Activated T-helper 1 cell treated with anti-CD3 and anti-CD28 coated beads, Interleukin-12 subunit alpha, Interleukin-12 subunit beta, Interleukin-2, Interleukin-4 antibody, amounts not matched to agents 30 ng/mL and 10 ng/mL and 1 ng/mL, durations not matched to agents 14 hours and 24 hours and 36 hours (primary cell): ENCODE measurements at regions of chr13 and their contacts with region 1.

Region 1: GRCh38 chr13:27424246-27425157 is at the start of gene GTF3A:
- DNase-seq: peak; percentile 88
- H3K4me3 Mint-ChIP-seq: peak within 1 kb of the TSS; percentile 89
- H3K27ac Mint-ChIP-seq: peak within 1 kb of the TSS; percentile 98
- H3K4me1 Mint-ChIP-seq: peaks cover 37% of the 10 kb centered on the region
- H3K27me3 Mint-ChIP-seq: no peaks in the 10 kb centered on the region
- total RNA-seq, gene GTF3A: 255 and 264 TPM in 2 replicates

Region 2: DNA sequence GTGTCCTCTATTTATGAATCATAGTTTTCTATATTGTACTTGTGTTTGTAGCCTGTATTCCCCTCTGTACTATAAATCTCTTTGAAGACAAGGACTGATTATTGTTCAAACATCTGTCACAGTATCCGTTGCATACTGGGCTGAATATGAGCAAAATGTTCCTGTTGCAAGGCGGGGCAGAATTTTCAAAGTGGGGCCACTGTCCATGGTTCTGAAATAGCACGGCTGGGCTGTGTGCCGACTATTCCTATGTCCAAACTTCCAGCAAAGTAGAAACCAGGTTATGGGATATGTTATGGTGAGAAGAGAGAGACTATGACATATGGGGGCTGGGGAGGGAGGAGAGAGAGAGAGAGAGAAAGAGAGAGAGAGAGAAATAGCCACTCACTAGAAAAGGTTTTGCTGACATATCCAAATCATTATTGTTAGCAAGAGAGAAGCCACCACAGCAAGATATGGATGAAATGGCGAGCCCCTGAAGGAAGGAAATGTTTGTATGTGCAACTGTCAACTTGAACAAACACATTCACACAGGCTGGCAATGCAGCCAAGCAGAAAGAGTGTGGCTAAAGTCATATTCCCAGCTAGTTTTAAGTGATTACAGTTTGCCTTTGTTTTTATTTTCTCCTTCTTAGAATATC is 556.9 kb before region 1 on chr13:
- intact Hi-C with region 1: no loop called
- DNase-seq: no peak
- H3K4me3 Mint-ChIP-seq: no peak overlapping the region
- H3K27ac Mint-ChIP-seq: no peak overlapping the region
- H3K4me1 Mint-ChIP-seq: no peaks in the 10 kb centered on the region
- H3K27me3 Mint-ChIP-seq: no peaks in the 10 kb centered on the region

Region 3: DNA sequence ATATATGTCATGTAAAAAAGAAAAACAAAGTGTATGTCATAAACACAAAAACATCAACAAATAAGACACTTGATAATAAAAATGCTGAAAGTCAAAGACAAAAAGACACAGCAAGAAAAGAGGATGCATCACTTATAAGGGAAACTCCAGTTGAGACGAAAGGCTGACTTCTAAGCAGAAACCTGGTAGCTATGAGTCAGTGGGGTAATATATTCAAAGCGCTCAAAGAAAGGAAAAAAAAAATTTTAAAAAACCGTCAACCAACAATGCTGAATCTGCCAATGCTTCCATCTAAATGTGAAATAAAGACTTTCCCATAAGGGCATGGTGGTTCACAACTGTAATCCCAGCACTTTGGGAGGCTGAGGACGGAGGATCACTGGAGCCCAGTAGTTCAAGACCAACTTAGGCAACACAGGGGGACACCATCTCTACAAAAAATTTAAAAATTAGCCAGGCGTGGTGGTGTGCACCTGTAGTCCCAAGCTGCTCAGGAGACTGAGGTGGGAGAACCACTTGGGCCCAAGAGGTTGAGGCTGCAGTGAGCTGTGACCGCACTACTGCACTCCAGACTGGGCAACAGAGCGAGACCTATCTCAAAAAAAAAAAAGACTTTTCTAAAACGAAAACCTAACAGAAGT is 276.9 kb before region 1 on chr13:
- intact Hi-C with region 1: loop called (anchors 5 kb)
- DNase-seq: no peak
- H3K4me3 Mint-ChIP-seq: peak overlapping the region; percentile 55
- H3K27ac Mint-ChIP-seq: peak overlapping the region; percentile 93
- H3K4me1 Mint-ChIP-seq: peaks cover 71% of the 10 kb centered on the region
- H3K27me3 Mint-ChIP-seq: no peaks in the 10 kb centered on the region

Region 4: DNA sequence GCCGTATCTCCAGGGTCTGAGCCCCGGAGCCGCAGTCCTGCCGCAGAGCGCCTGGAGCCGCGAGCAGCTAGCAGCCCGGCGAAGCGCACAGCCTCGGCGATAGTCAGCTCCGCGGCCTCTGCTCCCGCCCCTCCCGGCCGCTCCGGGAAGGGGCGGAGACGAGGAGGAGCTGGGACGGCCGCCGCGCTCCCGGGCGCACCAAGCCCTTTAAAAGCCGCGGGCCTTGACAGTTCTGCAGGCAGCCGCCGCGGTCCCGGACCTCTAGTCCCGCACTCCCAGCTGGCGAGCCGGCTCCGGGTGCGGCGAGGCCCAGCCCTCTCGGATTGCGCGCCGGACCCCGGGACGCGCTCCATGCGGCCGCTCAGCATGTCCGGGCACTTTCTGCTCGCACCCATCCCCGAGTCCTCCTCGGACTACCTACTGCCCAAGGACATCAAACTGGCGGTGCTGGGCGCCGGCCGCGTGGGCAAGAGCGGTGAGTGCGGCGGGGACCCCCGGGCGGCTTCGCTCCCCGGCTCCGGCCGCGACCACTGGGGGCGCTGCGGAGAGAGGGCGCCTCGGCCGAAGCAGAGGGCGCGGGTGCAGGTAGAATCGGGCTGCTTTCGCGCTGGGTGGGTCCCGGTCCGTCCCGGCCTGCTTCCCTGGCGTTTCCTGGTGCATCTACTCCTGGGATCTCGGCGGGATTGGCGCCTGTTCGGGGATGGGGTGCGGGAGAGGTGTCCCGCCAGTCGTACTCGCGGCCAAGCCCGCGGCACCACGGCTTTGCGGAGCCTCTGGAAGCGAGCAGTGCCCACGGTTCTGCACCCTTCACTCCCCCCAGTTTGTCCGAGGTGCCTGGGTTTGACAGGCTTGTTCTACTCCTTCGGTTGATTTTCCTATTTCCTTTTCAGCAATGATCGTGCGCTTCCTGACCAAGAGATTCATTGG is 153.6 kb before region 1 on chr13 and contains the start of gene RASL11A:
- intact Hi-C with region 1: loop called (anchors 5 kb)
- DNase-seq: peak; percentile 63
- H3K4me3 Mint-ChIP-seq: peak within 1 kb of the TSS; percentile 89
- H3K27ac Mint-ChIP-seq: peak within 1 kb of the TSS; percentile 24
- H3K4me1 Mint-ChIP-seq: peaks cover 11% of the 10 kb centered on the region
- H3K27me3 Mint-ChIP-seq: peaks cover 40% of the 10 kb centered on the region
- total RNA-seq, gene RASL11A: 1.9 and 3.2 TPM in 2 replicates

Region 5: DNA sequence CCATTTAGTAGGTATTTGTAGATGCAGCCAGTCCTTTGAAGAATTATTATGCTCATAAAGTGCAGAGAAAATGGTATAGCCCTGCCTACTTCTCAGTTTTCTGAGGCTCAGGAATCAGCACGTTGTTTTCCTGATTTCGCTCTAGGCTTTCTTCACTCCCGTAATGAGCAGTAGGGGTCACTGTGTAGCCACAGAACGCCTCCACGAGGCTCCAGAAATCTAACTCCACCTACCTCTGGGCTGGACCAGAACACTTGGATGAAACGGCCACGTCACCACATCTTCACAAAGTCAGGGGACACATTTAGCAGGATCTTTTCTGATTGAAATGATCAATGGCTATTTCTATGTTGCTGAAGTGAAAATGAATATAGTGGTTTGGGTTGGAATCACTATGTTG is 49.9 kb before region 1 on chr13:
- intact Hi-C with region 1: loop called (anchors 1 kb)
- DNase-seq: peak; percentile 38
- H3K4me3 Mint-ChIP-seq: no peak overlapping the region
- H3K27ac Mint-ChIP-seq: no peak overlapping the region
- H3K4me1 Mint-ChIP-seq: peaks cover 26% of the 10 kb centered on the region
- H3K27me3 Mint-ChIP-seq: peaks cover 26% of the 10 kb centered on the region

Region 6: GRCh38 chr13:27449936-27450828 is 25.7 kb after region 1 on chr13 and contains the start of gene MTIF3:
- intact Hi-C with region 1: loop called (anchors 1 kb)
- DNase-seq: peak; percentile 95
- H3K4me3 Mint-ChIP-seq: peak within 1 kb of the TSS; percentile 91
- H3K27ac Mint-ChIP-seq: peak within 1 kb of the TSS; percentile 93
- H3K4me1 Mint-ChIP-seq: peaks cover 58% of the 10 kb centered on the region
- H3K27me3 Mint-ChIP-seq: no peaks in the 10 kb centered on the region
- total RNA-seq, gene MTIF3: 30.4 and 36.0 TPM in 2 replicates

Region 7: DNA sequence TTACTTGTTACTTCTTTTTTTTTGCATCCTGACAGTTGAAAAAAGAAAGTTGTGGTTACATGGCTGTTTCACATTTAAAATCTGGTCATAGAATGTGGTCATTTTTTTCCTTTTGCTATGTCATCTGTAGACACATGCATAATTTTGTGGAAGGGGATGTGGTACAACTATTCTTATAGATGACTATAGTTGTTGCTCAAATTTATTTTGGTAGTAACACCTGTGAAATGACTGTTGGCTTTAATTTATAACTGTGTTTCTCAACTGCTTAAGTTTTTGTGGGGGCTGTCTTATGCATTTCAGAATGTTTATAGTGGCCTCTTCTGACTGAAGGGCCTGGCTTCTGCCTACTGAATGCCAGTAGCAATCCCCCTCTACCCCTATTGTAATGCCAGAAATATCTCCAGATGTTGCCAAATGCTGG is 844.3 kb after region 1 on chr13:
- intact Hi-C with region 1: loop called (anchors 5 kb)
- DNase-seq: no peak
- H3K4me3 Mint-ChIP-seq: peak overlapping the region; percentile 49
- H3K27ac Mint-ChIP-seq: peak overlapping the region; percentile 70
- H3K4me1 Mint-ChIP-seq: peaks cover 27% of the 10 kb centered on the region
- H3K27me3 Mint-ChIP-seq: no peaks in the 10 kb centered on the region